ENCODE measurements at regions of chr11 and their contacts with region 1.

Region 1: GRCh38 chr11:59802639-59803176 is 7.9 kb downstream of the MRPL16 start:
- DNase-seq: peak; percentile 60 to 70 (median 64)
- H3K4me3 ChIP-seq: no peak overlapping the region
- H3K4me3 Mint-ChIP-seq: no peak overlapping the region
- H3K27ac ChIP-seq: no peak overlapping the region
- H3K27ac Mint-ChIP-seq: peak overlapping the region in 2 of 7 donors; percentile 10 to 34
- H3K4me1 ChIP-seq: no peaks in the 10 kb centered on the region
- H3K4me1 Mint-ChIP-seq: no peaks in the 10 kb centered on the region
- H3K27me3 ChIP-seq: no peaks in the 10 kb centered on the region
- H3K27me3 Mint-ChIP-seq: no peaks in the 10 kb centered on the region

Region 2: GRCh38 chr11:59767225-59767611 is 35.5 kb before region 1 on chr11:
- CTCF ChIA-PET with region 1: interaction called, 32 read pairs
- POLR2A ChIA-PET with region 1: interaction called, 4 read pairs
- intact Hi-C with region 1: no loop called
- DNase-seq: peak; percentile 58 to 66 (median 64)
- H3K4me3 ChIP-seq: no peak overlapping the region
- H3K4me3 Mint-ChIP-seq: peak overlapping the region in 4 of 8 donors; percentile 52 to 67 (median 59)
- H3K27ac ChIP-seq: no peak overlapping the region
- H3K27ac Mint-ChIP-seq: peak overlapping the region in 6 of 7 donors; percentile 4 to 84 (median 18)
- H3K4me1 ChIP-seq: peaks cover 54% of the 10 kb centered on the region
- H3K4me1 Mint-ChIP-seq: peaks cover 15 to 34% (median 27%) of the 10 kb centered on the region in 4 donors
- H3K27me3 ChIP-seq: no peaks in the 10 kb centered on the region
- H3K27me3 Mint-ChIP-seq: peaks cover 0 to 2% of the 10 kb centered on the region in 2 donors

Region 3: DNA sequence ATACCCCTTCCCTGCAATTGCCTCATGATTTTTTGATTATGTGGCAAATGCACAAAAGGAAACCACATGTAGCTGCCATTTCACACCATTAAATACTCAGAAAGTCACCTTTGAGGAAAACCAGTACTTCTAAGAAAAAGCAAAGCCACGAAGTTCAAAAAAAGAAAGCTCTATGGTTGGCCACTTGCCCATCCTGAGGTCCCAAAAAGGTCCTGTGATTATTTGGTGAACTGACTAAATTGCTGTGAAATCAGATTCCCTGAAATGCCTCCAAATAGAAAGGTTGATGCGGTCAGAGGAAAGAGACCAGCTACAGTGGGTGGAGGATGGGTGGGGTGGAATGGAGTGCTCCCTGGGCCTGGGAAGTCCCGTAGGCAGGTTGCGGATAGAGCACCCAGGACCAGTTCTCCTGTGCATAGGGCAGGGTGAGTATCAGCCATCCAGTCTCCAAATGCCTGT is 19.0 kb before region 1 on chr11:
- CTCF ChIA-PET with region 1: interaction called, 11 read pairs
- POLR2A ChIA-PET with region 1: no interaction called
- intact Hi-C with region 1: no loop called
- DNase-seq: no peak
- H3K4me3 ChIP-seq: no peak overlapping the region
- H3K4me3 Mint-ChIP-seq: peak overlapping the region in 3 of 8 donors; percentile 21 to 67 (median 63)
- H3K27ac ChIP-seq: no peak overlapping the region
- H3K27ac Mint-ChIP-seq: peak overlapping the region in 1 of 7 donors; percentile 27
- H3K4me1 ChIP-seq: peaks cover 12% of the 10 kb centered on the region
- H3K4me1 Mint-ChIP-seq: peaks cover 14 to 54% (median 26%) of the 10 kb centered on the region in 4 donors
- H3K27me3 ChIP-seq: no peaks in the 10 kb centered on the region
- H3K27me3 Mint-ChIP-seq: no peaks in the 10 kb centered on the region

Region 4: DNA sequence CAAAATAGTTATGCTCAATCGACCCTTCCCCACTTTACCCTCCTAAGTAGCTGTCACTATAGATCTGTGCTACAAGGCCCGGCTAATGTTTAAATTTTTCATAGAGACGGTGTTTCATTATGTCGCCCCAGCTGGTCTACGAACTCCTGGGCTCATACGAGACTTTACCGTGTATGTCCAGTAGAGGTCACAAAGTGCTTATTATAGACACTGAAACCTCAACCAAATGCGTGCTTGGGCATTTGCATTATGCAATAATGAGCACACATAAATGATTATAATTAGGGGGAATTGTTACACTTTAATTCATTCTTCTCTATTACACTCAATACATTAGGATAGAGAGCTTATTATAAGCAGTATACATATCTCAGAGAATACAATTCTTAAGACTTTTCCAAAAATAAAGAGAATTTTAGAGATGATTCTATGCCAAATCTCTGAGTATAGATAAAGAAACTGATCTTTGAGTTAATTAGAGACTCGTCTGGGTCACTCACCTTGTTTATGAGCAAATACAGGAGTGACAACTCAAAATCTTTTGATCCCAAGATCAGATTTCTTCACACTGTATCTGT is 20.4 kb after region 1 on chr11:
- CTCF ChIA-PET with region 1: no interaction called
- POLR2A ChIA-PET with region 1: no interaction called
- intact Hi-C with region 1: no loop called
- DNase-seq: peak; percentile 26 to 39 (median 33)
- H3K4me3 ChIP-seq: no peak overlapping the region
- H3K4me3 Mint-ChIP-seq: peak overlapping the region in 1 of 8 donors; percentile 52
- H3K27ac ChIP-seq: no peak overlapping the region
- H3K27ac Mint-ChIP-seq: peak overlapping the region in 1 of 7 donors; percentile 5
- H3K4me1 ChIP-seq: no peaks in the 10 kb centered on the region
- H3K4me1 Mint-ChIP-seq: peaks cover 6 to 14% (median 11%) of the 10 kb centered on the region in 4 donors
- H3K27me3 ChIP-seq: no peaks in the 10 kb centered on the region
- H3K27me3 Mint-ChIP-seq: no peaks in the 10 kb centered on the region